Posterior cingulate gyrus (tissue), 11 donors: ENCODE measurements at regions of chr10 and their contacts with region 1.

Region 1: DNA sequence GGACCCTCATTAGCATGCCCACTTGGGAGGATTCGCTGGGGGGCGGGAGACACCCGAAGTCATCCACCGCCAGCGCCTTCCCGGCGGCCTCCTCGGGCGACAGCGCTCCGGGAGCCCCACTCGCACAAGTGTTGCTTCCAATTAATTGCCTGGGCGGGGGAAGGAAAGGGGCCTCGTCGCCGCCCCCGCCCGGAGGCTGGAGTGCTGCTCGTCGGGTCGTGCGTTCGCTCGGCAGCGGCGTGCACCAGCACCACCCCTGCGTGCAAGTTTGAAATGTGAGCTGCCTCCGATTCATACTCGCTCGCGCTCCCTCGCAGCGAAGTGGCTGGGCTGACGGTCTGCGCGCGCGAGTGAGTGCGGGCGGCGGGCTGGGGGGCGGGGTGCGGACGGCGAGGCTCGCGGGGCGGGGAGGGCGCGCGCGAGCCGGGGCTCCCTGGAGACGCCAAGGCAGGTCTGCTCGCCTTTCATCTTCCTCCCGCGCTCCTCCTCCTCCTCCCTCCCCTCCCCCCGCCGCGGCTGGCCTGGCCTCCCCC is 104.6 kb upstream of the PPIF start:
- DNase-seq: peak in 8 of 10 donors; percentile 53 to 95 (median 69)

Region 2: GRCh38 chr10:79274279-79275104 is 31.8 kb after region 1 on chr10:
- intact Hi-C with region 1: loop called (anchors 5 kb)
- DNase-seq: peak; percentile 88 to 99 (median 92)

Region 3: DNA sequence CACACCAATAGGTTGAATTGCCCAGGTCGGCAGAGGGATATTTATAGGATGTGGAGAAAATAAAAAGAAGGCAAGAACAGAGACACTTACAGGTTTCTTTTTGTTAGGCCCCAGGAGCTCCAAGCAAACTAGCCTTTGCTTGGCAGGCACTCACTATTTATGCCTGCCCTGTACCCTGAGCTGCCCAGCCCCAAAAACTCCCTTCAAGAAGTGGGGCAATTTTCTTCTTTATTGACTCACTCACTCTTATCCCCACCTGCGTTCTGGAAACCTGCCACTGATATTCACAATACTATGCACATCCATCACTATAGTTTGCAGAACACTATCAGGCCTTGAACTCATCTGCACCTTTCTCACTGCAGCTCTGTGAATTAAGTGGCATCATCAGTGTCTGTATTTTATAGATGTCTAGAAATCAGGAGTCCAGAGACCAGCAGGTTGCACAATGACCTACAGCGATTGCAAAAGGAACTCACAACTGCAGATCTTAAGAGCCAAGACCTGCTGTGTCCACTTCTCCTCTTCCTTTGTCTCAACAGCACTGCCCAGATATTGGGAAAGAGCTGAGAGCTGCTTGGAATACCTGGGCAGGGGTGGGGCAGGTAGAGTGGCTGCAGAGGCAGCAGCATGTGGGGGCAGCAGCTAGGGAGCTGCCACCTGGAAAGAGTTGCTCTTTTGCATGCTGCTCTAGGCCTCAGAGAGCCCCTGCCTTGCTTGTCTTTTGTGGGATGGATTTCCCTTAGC is 706.5 kb after region 1 on chr10 and contains the start of gene SFTPD:
- intact Hi-C with region 1: no loop called
- DNase-seq: no peak